ENCODE measurements at regions of chr2 and their contacts with region 1.

Region 1: GRCh38 chr2:127064642-127065250 is 42.2 kb downstream of the BIN1 start:
- DNase-seq: peak; percentile 97
- ATAC-seq: peak; percentile 91
- H3K4me3 ChIP-seq: no peak overlapping the region
- H3K27ac ChIP-seq: peak overlapping the region in 1 of 2 donors; percentile 57
- H3K4me1 ChIP-seq: no peaks in the 10 kb centered on the region
- H3K27me3 ChIP-seq: no peaks in the 10 kb centered on the region

Region 2: GRCh38 chr2:127100251-127101047 is 35.7 kb after region 1 on chr2:
- intact Hi-C with region 1: loop called in 1 of 2 experiments (anchors 5 kb)
- DNase-seq: peak; percentile 30 to 69
- ATAC-seq: no peak
- H3K4me3 ChIP-seq: no peak overlapping the region
- H3K27ac ChIP-seq: no peak overlapping the region
- H3K4me1 ChIP-seq: no peaks in the 10 kb centered on the region
- H3K27me3 ChIP-seq: no peaks in the 10 kb centered on the region

Region 3: GRCh38 chr2:127106951-127107621 is 42.3 kb after region 1 on chr2 and contains the start of gene BIN1:
- intact Hi-C with region 1: loop called (anchors 2 to 5 kb)
- DNase-seq: peak; percentile 90 to 94
- ATAC-seq: peak; percentile 91
- H3K4me3 ChIP-seq: peak within 1 kb of the TSS; percentile 52 to 73
- H3K27ac ChIP-seq: no peak within 1 kb of the TSS
- H3K4me1 ChIP-seq: no peaks in the 10 kb centered on the region
- H3K27me3 ChIP-seq: no peaks in the 10 kb centered on the region
- total RNA-seq, gene BIN1: 22.9 to 37.9 TPM

Measured in aorta (tissue), 5 donors.